ENCODE measurements at regions of chr3 and their contacts with region 1.

Region 1: DNA sequence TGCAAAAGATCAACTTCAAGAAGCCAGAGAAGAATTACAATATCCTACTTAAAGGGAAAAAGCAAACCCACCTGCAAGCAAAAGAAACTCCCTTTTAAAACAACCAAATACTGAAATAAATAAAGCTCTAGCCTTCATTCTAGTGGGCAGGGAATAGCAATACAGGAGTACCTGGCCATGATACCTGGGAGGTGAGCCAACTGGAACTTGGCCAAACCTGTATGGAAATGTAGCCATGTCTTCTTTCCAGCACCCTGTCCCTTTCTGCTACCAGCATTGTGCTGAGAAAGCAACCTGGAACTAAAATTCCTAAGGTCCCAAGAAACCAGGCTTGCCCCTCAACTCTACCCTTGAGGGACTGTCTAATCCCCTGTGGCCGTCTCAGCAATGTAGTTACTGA is 530.0 kb downstream of the EPHB1 start:
- DNase-seq: no peak
- ATAC-seq: no peak
- H3K4me3 ChIP-seq: no peak overlapping the region
- H3K27ac ChIP-seq: no peak overlapping the region
- H3K4me1 ChIP-seq: no peaks in the 10 kb centered on the region
- H3K27me3 ChIP-seq: no peaks in the 10 kb centered on the region
- CTCF ChIP-seq: no peak
- POLR2A ChIP-seq: no peak
- RAD21 ChIP-seq: no peak

Region 2: GRCh38 chr3:135272026-135272669 is 52.9 kb before region 1 on chr3:
- CTCF ChIA-PET with region 1: no interaction called
- POLR2A ChIA-PET with region 1: no interaction called
- dilution Hi-C with region 1: no loop called
- in situ Hi-C with region 1: no loop called
- intact Hi-C with region 1: loop called (anchors 2 kb)
- DNase-seq: no peak
- ATAC-seq: no peak
- H3K4me3 ChIP-seq: no peak overlapping the region
- H3K27ac ChIP-seq: no peak overlapping the region
- H3K4me1 ChIP-seq: no peaks in the 10 kb centered on the region
- H3K27me3 ChIP-seq: no peaks in the 10 kb centered on the region
- CTCF ChIP-seq: no peak
- POLR2A ChIP-seq: no peak
- RAD21 ChIP-seq: no peak

Region 3: GRCh38 chr3:135383301-135383700 is 58.2 kb after region 1 on chr3:
- CTCF ChIA-PET with region 1: no interaction called
- POLR2A ChIA-PET with region 1: no interaction called
- dilution Hi-C with region 1: no loop called
- in situ Hi-C with region 1: no loop called
- intact Hi-C with region 1: no loop called
- DNase-seq: no peak
- ATAC-seq: no peak
- H3K4me3 ChIP-seq: no peak overlapping the region
- H3K27ac ChIP-seq: no peak overlapping the region
- H3K4me1 ChIP-seq: no peaks in the 10 kb centered on the region
- H3K27me3 ChIP-seq: no peaks in the 10 kb centered on the region
- CTCF ChIP-seq: no peak
- POLR2A ChIP-seq: no peak
- RAD21 ChIP-seq: no peak

Measured in IMR-90 (cell line).